ENCODE measurements at regions of chr2 and their contacts with region 1.

Region 1: GRCh38 chr2:231545105-231545902 is 15.1 kb upstream of the NMUR1 start:
- DNase-seq: peak; percentile 88
- ATAC-seq: peak; percentile 92
- H3K4me3 Mint-ChIP-seq: peak overlapping the region; percentile 57
- H3K27ac Mint-ChIP-seq: peak overlapping the region; percentile 90
- H3K4me1 Mint-ChIP-seq: peaks cover 39% of the 10 kb centered on the region
- H3K27me3 Mint-ChIP-seq: peaks cover 18% of the 10 kb centered on the region

Region 2: GRCh38 chr2:231530091-231531011 is 15.0 kb before region 1 on chr2 and contains the start of gene NMUR1:
- CTCF ChIA-PET with region 1: interaction called, 10 read pairs
- POLR2A ChIA-PET with region 1: interaction called, 3 read pairs
- DNase-seq: peak; percentile 72
- ATAC-seq: peak; percentile 94
- H3K4me3 Mint-ChIP-seq: peak within 1 kb of the TSS; percentile 18
- H3K27ac Mint-ChIP-seq: peak within 1 kb of the TSS; percentile 43
- H3K4me1 Mint-ChIP-seq: peaks cover 27% of the 10 kb centered on the region
- H3K27me3 Mint-ChIP-seq: peaks cover 63% of the 10 kb centered on the region
- total RNA-seq, gene NMUR1: 0.95 to 0.99 TPM

Region 3: DNA sequence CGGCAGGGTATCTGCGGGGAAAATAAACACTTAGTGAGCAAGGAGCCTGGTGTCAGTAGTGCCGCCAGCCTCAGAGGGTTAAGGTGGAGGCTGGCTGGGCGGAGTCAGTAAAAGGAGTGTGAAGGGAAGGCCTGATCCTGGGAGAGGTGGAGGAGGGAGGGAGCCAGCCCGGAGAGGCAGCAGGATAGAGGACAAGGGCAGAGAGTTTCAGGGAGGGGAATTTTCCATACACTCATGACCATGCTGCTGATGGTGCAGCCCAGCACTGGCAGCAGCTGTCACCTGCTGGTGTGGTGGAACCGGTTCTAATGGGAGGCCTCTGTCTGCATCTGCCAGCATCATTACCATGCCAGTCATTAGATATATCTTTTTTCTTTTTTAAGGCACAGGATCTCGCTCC is 45.3 kb after region 1 on chr2:
- CTCF ChIA-PET with region 1: no interaction called
- POLR2A ChIA-PET with region 1: no interaction called
- DNase-seq: no peak
- ATAC-seq: no peak
- H3K4me3 Mint-ChIP-seq: no peak overlapping the region
- H3K27ac Mint-ChIP-seq: no peak overlapping the region
- H3K4me1 Mint-ChIP-seq: no peaks in the 10 kb centered on the region
- H3K27me3 Mint-ChIP-seq: no peaks in the 10 kb centered on the region

Region 4: DNA sequence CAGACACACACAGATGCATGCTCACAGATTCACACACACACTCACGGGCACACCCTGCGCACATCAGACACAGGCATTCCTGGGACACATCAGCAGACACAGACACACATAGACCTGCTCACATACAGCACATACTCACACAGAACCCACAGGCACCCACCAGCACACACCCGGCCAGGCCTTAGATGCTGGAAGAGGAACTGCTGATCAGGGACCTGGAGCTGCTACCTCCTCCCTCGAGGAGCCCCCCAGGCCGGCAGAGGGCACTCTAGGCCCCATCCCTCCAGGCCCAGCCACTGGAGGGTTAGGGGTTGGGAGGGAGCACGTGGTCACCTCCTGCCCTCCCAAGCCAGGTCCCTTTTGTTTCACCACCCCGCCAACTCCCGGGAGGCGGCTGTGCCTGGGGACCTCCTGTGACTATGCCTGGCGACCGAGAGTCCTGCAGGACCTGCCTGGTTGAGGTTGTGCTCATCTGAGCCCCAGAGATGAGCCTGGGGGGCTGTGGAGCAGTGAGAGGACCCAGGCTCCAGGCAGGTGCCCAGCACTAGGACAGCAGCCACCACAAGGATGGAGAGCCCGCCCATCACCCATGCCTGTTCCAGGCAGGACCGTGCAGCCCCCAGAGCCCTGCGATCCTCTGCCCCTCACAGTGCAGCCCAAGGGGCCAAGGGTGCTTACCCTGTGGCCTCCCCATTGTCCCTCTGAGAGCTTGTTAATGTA is 142.0 kb after region 1 on chr2:
- CTCF ChIA-PET with region 1: no interaction called
- POLR2A ChIA-PET with region 1: no interaction called
- DNase-seq: peak; percentile 72
- ATAC-seq: peak; percentile 92
- H3K4me3 Mint-ChIP-seq: no peak overlapping the region
- H3K27ac Mint-ChIP-seq: no peak overlapping the region
- H3K4me1 Mint-ChIP-seq: peaks cover 15% of the 10 kb centered on the region
- H3K27me3 Mint-ChIP-seq: peaks cover 6% of the 10 kb centered on the region

Measured in activated CD8-positive, alpha-beta T cell treated with anti-CD3 and anti-CD28 coated beads, Interleukin-2, amount 10 ng/mL, durations not matched to agents 7 days and 5 days (primary cell).